Activated CD4-positive, alpha-beta T cell treated with anti-CD3 and anti-CD28 coated beads, Interleukin-2, amount 10 ng/mL, durations not matched to agents 7 days and 5 days (primary cell): ENCODE measurements at regions of chr2 and their contacts with region 1.

Region 1: GRCh38 chr2:96174251-96175144 is 29.3 kb upstream of the DUSP2 start:
- DNase-seq: peak; percentile 85
- H3K4me3 Mint-ChIP-seq: no peak overlapping the region
- H3K27ac Mint-ChIP-seq: no peak overlapping the region
- H3K4me1 Mint-ChIP-seq: peaks cover 13% of the 10 kb centered on the region
- H3K27me3 Mint-ChIP-seq: no peaks in the 10 kb centered on the region

Region 2: GRCh38 chr2:96116879-96117697 is 57.4 kb before region 1 on chr2:
- CTCF ChIA-PET with region 1: interaction called, 28 read pairs
- POLR2A ChIA-PET with region 1: no interaction called
- DNase-seq: peak; percentile 50
- H3K4me3 Mint-ChIP-seq: peak overlapping the region; percentile 52
- H3K27ac Mint-ChIP-seq: no peak overlapping the region
- H3K4me1 Mint-ChIP-seq: peaks cover 17% of the 10 kb centered on the region
- H3K27me3 Mint-ChIP-seq: peaks cover 40% of the 10 kb centered on the region

Region 3: DNA sequence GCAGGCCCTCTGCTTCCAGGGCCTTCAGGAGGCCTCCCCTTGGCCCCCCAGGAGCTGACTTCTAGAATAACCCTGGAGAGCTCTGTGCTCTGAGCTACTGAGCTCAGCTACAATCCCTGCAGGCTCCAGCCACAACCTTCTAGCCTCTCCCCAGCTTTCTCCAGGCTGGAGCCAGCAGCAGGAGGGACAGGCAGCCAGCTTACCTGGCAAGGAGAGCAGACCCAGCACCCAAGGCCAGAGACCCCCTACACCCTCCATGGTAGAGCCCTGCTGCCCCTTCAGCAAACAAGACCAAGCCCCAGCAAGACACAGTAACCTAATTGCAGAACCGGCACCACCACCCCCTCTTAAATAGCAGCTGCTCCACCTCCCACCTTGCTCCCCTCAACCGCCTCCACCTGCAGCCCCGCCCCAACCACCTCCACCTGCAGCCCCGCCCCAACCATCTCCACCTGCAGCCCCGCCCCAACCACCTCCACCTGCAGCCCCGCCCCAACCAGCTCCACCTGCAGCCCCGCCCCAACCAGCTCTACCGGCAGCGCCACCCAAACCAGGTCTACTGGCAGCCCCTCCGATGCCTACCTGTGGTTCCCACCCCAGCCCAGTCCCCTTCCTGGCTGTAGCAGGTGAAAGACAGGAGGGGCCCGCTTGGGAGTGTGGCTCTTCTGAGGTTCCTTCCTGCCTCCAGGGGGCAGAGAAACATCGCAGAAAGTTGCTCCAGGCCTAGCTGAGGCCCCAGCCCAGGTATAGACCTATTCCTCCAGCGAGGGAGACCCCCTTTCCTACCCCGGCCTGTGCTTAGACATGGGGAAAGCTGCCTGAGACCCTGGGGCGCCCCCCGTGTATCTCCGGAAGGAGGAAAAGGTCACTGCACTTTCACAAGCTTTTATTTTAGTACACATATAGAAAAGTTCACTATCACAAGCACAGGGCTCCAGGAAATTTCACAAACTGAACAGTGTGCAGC is 36.0 kb before region 1 on chr2 and contains the start of gene ASTL:
- CTCF ChIA-PET with region 1: interaction called, 239 read pairs
- POLR2A ChIA-PET with region 1: interaction called, 17 read pairs
- DNase-seq: peak; percentile 76
- H3K4me3 Mint-ChIP-seq: no peak within 1 kb of the TSS
- H3K27ac Mint-ChIP-seq: no peak within 1 kb of the TSS
- H3K4me1 Mint-ChIP-seq: peaks cover 19% of the 10 kb centered on the region
- H3K27me3 Mint-ChIP-seq: no peaks in the 10 kb centered on the region
- total RNA-seq, gene ASTL: 0.22 TPM in 1 of 2 experiments, not detected in the other

Region 4: DNA sequence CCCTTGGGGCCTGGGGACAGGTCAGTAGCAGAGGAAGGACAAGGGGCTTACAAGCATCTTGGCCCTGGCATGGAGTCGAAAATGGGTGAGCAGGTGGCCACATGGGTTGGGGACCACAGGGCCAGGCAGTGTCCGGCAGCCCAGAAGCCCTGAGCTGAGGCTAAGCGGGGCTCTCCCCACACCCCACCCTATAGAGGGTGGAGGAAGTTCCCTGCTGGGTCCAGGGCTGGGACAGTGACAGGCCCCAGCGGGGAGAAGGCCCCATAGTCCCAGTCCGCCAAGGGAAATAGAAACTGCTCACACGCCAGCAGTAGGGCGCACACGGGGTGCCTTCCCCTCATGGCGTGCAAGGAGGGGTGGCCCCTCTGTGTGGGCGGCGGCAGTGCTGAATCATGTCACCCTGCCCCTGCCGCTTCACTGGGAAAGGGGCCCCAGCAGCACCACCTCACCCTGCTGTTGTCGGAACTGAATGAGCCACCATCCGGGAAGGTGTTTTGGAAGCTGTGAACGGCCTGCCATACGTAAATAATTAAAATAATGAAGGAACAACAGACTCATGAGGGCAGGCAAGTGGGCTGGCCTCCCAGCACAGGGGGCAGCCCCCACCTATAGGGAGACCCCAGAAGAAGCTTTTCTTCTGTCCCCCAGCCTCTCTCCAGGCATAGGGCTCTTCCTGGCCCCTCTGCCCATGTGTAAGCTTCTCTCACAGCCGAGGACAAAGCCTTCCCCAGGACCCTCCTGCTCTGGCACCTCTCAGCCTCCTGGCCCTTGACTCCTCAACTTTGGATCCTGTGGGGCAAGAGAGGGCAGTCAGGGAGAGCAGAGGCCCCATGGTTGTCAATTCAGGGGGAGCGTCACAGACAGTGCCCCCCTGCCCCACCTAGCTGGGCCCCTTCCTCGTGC is 16.6 kb before region 1 on chr2:
- CTCF ChIA-PET with region 1: interaction called, 26 read pairs
- POLR2A ChIA-PET with region 1: no interaction called
- DNase-seq: peak; percentile 69
- H3K4me3 Mint-ChIP-seq: no peak overlapping the region
- H3K27ac Mint-ChIP-seq: peak overlapping the region; percentile 84
- H3K4me1 Mint-ChIP-seq: peaks cover 73% of the 10 kb centered on the region
- H3K27me3 Mint-ChIP-seq: no peaks in the 10 kb centered on the region

Region 5: DNA sequence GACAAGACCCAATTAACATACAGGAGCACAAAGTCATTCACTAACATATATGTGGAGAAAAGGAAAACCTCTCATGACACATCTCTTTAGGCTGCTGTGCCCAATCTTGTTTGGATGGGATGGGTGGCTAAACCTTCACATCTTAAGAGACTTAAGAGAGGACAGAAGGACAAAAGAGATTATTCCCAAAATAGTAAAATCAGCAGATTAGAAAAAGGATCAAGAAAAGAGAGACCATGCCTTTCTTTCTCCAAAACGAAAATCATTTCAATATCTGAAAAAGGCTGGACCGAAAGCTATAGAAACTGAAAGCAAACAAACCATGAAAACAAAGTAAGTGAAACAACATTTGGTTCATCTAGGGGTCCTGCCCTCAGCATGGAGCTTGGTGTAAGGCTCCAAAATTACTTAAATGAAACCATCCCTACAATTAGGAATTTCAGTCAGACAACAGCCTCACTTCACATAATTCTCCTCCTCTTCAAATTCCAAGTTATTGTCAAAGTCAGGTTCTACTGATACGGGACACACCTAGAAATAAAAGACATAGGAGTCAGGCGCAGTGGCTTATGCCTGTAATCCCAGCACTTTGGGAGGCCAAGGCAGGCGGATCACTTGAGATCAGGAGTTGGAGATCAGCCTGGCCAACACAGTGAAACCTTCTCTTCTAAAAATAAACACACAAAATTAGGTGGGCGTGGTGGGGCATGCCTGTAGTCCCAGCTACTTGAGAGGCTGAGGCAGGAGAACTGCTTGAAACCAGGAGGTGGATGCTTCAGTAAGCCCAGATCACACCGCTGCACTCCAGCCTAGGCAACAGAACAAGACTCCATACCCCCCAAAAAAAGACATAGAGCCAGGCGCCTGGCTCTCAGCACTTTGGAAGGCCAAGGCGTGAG is 28.9 kb after region 1 on chr2:
- CTCF ChIA-PET with region 1: interaction called, 18 read pairs
- POLR2A ChIA-PET with region 1: no interaction called
- DNase-seq: peak; percentile 12
- H3K4me3 Mint-ChIP-seq: peak overlapping the region; percentile 66
- H3K27ac Mint-ChIP-seq: peak overlapping the region; percentile 83
- H3K4me1 Mint-ChIP-seq: peaks cover 78% of the 10 kb centered on the region
- H3K27me3 Mint-ChIP-seq: no peaks in the 10 kb centered on the region

Region 6: DNA sequence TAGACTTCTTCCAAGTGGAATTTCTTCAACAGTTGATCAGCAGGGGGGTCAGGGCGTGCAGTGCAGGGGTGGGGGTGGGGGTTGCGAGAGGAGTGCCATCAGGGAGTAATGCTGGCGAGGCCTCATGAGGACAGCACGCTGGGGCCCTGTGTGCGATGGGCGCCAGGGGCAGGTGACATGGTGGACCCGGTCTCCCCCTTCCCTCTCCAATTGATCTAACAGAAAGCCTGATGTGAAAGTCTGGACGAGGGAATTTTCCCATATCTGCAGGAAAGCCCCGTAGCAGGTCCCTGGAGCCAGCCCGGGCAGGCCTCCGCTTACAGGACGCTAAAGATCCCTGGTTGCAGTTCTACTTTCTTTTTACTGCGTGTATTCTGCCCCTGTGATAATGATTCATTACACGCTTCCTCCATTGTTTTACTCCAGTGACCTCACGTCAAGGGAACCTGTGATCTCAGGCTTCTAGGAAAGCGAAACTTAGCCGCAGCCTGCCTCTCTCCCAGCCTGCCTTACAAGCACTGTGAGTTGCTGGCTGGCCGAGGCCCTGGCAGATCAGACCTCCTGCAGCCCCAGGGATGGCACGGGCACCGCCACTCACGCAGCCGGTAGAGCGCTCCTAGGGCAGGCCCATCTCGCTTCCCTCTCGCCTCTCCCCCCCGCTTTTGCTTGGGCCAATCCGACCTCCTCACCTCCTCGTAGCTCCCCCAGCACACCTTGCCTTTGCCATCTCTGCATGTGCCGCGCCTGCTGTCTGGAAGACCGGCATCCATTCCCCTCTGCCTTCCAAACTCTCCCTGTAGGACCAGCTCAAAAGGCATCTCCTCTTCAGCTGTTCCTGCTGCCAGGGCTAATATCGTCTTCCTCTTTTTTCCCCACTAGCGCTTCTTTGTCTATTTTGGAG is 311.5 kb after region 1 on chr2:
- CTCF ChIA-PET with region 1: no interaction called
- POLR2A ChIA-PET with region 1: no interaction called
- DNase-seq: peak; percentile 93
- H3K4me3 Mint-ChIP-seq: peak overlapping the region; percentile 90
- H3K27ac Mint-ChIP-seq: peak overlapping the region; percentile 99
- H3K4me1 Mint-ChIP-seq: peaks cover 54% of the 10 kb centered on the region
- H3K27me3 Mint-ChIP-seq: no peaks in the 10 kb centered on the region